ENCODE measurements at regions of chr2 and their contacts with region 1.

Region 1: DNA sequence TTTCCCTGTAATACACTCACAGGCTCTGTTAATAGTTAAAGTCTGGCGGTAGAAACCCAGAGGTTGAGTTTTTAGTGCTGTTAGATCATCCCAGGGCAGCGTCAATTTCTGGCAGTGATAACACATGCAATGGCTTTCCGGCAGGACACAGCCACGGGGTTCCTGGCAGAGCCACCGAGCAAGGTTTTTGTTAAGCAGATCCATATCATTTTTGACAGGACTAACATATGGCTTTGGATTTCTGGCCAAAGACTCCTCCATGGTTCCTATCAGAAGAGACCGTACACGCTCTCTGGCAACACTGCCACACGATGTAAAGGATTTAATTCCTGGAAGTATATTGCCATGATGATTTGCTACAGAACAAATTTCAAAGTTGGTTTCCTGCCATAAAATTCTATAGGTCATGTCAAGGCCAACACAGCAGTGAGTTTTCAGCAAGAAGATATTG is 854.3 kb downstream of the LRRTM4 start:
- DNase-seq: peak; percentile 58
- H3K4me3 ChIP-seq: no peak overlapping the region
- H3K27ac ChIP-seq: peak overlapping the region in 1 of 2 experiments; percentile 100; a peak in 2 of 4 replicates
- H3K4me1 ChIP-seq: peaks cover 0 to 26% of the 10 kb centered on the region in 2 experiments; a peak in 2 of 4 replicates
- H3K27me3 ChIP-seq: no peaks in the 10 kb centered on the region
- CTCF ChIP-seq: no peak
- EP300 ChIP-seq: peak; percentile 25 to 100; a peak in 2 of 4 replicates
- RAD21 ChIP-seq: no peak

Region 2: GRCh38 chr2:76050196-76050595 is 617.6 kb before region 1 on chr2:
- CTCF ChIA-PET with region 1: no interaction called
- POLR2A ChIA-PET with region 1: no interaction called
- DNase-seq: no peak
- H3K4me3 ChIP-seq: no peak overlapping the region
- H3K27ac ChIP-seq: no peak overlapping the region
- H3K4me1 ChIP-seq: no peaks in the 10 kb centered on the region
- H3K27me3 ChIP-seq: no peaks in the 10 kb centered on the region
- CTCF ChIP-seq: no peak
- EP300 ChIP-seq: no peak
- RAD21 ChIP-seq: peak; percentile 41

Region 3: DNA sequence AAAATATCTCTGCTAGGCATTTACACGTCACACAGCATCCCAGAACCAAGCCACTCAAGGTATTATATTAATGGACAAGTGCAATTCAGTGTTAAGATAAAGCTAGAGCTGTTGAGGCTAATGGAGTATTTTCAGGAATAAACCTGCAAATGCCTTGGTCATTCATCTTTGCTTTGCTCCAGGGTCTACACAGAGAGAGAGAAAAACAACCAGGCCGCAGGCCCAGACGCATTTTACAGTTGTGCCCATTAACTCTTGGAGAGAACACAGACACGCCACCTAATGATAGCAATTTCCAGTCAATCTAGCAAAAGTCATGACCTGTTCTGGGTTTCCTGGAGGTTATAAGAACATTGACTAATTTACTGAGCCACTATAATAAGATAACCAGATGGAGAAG is 25.1 kb after region 1 on chr2:
- CTCF ChIA-PET with region 1: interaction called, 11 read pairs
- POLR2A ChIA-PET with region 1: interaction called, 8 read pairs
- DNase-seq: peak; percentile 67
- H3K4me3 ChIP-seq: no peak overlapping the region
- H3K27ac ChIP-seq: peak overlapping the region in 1 of 2 experiments; percentile 100; a peak in 2 of 4 replicates
- H3K4me1 ChIP-seq: peaks cover 0 to 16% of the 10 kb centered on the region in 2 experiments; a peak in 2 of 4 replicates
- H3K27me3 ChIP-seq: no peaks in the 10 kb centered on the region
- CTCF ChIP-seq: no peak
- EP300 ChIP-seq: peak in 1 of 2 experiments; percentile 100; a peak in 2 of 4 replicates
- RAD21 ChIP-seq: peak; percentile 51